ENCODE measurements at regions of chr9 and their contacts with region 1.

Region 1: DNA sequence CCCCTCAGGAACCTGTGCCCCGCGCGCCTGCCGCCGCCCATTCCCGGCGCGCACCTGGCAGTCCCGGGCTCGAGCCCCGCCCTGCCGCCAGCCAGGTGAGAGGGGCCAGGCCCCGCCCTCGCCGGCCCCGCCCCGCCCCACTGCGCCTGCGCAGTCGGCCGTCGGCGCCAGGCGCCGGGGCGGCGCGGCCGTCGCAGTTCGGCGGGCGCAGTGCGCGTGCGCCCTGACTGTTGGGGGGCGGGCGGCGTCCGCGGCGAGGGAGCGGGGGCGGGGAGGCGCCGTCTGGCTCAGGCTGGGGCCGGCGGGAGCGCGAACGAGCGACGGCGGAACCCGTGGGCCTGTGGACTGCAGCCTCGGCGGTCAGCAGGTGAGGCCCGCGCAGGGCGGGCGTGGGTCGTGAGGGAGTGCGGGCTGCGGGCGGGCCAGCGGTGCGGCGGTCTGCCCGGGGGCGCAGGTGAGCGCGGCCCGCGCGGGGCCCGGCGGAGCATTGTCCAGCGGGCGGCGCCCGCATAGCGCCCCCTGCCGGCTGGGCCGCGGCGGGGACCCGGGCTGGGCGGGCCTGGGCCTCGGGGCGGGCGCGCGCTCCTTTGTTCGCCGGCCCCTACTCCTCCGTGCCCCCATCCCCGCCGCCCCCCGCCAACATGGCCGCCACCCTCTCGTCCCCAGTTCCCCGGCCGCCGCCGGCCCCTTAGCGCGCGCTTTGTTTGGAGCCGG is at the start of gene SPIN1:
- DNase-seq: peak; percentile 70
- H3K4me3 ChIP-seq: peak within 1 kb of the TSS; percentile 87 to 91
- H3K27ac ChIP-seq: peak within 1 kb of the TSS; percentile 87 to 95
- H3K4me1 ChIP-seq: no peaks in the 10 kb centered on the region
- H3K27me3 ChIP-seq: no peaks in the 10 kb centered on the region
- CTCF ChIP-seq: peak; percentile 41 to 72 (median 50)
- POLR2A ChIP-seq: peak; percentile 75
- total RNA-seq, gene SPIN1: 74.5 to 98.5 TPM

Region 2: GRCh38 chr9:88106491-88106890 is 281.8 kb before region 1 on chr9:
- intact Hi-C with region 1: loop called (anchors 10 kb)
- DNase-seq: no peak
- H3K4me3 ChIP-seq: no peak overlapping the region
- H3K27ac ChIP-seq: no peak overlapping the region
- H3K4me1 ChIP-seq: no peaks in the 10 kb centered on the region
- H3K27me3 ChIP-seq: no peaks in the 10 kb centered on the region
- CTCF ChIP-seq: peak in 3 of 4 experiments; percentile 47 to 73 (median 70)
- POLR2A ChIP-seq: no peak

Region 3: GRCh38 chr9:88534456-88535261 is 146.3 kb after region 1 on chr9 and contains the start of gene NXNL2:
- intact Hi-C with region 1: loop called (anchors 2 kb)
- DNase-seq: peak; percentile 84
- H3K4me3 ChIP-seq: peak within 1 kb of the TSS; percentile 31 to 51
- H3K27ac ChIP-seq: peak within 1 kb of the TSS; percentile 73 to 77
- H3K4me1 ChIP-seq: no peaks in the 10 kb centered on the region
- H3K27me3 ChIP-seq: no peaks in the 10 kb centered on the region
- CTCF ChIP-seq: no peak
- POLR2A ChIP-seq: peak; percentile 50
- total RNA-seq, gene NXNL2: 0.68 to 1.9 TPM

Measured in prostate gland (tissue), 2 donors.